ENCODE measurements at regions of chr1 and their contacts with region 1.

Region 1: DNA sequence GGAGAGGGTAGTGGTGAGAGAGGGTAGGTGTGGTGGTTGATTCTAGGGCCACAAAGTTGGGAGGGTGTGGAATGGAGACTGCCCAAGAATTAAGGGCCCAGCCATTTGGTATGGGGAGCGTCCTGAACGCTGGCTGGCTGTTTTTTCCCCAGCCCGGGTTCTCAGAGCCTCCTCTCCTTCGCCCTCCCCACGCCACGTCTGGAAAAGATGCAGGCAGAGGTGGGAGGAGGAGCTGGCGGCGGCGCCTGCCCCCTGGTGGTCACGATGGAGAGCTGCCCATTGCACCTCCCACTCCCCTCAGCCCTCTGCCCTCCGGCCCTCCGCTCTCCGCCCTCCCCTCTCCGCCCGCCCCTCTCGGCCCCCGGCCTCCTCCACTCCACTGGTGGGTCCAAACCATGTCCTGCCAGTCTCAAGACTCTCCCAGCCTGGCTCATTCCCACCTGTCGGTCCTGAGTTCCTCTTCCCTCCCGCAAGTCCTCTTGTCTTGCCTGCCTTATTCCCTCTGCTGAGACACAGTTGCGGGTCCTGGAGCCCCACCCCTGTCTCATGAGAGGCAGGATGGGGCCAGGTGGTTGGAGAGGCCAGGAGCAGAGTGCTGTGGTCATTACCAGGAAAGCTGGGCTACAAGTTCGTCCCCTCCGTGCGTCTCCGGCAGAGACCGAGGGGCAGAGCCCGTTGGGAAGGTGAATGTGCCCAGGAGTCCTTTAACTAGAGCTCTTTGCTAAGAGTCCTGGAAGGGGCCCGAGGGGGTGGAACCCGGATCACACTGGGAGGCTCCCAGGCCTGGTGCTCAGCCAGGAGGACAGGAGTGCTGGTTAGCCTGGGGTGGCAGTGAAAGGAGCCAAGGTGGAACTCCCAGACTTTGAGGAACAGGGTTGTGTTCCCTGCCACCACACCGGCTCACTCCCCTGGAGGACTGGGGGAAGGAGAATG is 22.6 kb downstream of the ETNK2 start:
- DNase-seq: peak; percentile 56 to 75 (median 58)
- H3K4me3 ChIP-seq: no peak overlapping the region
- H3K4me3 Mint-ChIP-seq: peak overlapping the region; percentile 31 to 65
- H3K27ac ChIP-seq: no peak overlapping the region
- H3K27ac Mint-ChIP-seq: peak overlapping the region in 2 of 7 donors; percentile 19 to 33
- H3K4me1 ChIP-seq: peaks cover 7 to 8% of the 10 kb centered on the region in 2 donors
- H3K4me1 Mint-ChIP-seq: peaks cover 8% of the 10 kb centered on the region
- H3K27me3 ChIP-seq: no peaks in the 10 kb centered on the region
- H3K27me3 Mint-ChIP-seq: peaks cover 0 to 5% (median 4%) of the 10 kb centered on the region in 3 donors
- CTCF ChIP-seq: peak; percentile 96

Region 2: DNA sequence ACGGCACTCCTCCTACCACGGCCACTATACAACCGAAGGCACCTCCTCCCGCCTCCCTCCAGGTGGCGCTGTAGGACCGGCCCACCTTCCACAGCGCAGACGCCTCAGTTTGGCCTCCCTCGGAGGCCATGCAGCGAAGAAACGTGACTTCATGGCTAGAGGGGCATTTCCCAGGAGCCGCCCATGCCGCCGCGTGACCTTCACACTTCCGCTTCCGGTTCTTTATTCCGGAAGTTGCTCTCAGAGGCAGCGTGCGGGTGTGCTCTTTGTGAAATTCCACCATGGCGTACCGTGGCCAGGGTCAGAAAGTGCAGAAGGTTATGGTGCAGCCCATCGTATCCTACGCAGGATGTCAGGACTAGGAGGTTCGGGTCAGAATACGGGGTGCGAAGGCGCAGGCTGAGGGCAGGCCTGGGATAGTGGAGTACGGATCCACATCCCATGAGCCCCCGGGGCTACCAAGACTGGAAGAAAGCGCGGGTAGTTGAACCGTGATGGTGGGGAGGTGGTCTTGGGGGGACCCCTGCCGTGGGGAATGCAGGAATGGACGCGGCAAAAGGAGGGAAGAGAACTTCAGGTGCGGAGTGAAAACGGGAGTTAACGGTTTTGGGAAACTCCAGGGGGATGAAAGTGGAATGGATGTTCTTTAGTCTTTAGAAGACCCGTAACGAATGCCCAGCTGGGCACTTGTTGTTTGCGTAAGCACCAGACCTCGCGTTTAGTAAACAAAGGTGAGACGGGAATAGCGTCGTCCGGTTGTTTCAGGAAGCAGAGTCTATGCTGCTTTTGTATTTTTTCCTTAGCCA is 267.6 kb before region 1 on chr1 and contains the start of gene SNRPE:
- intact Hi-C with region 1: loop called (anchors 2 to 5 kb)
- DNase-seq: peak; percentile 97 to 99 (median 98)
- H3K4me3 ChIP-seq: peak within 1 kb of the TSS; percentile 75 to 100 (median 76)
- H3K4me3 Mint-ChIP-seq: peak within 1 kb of the TSS; percentile 95 to 100
- H3K27ac ChIP-seq: peak within 1 kb of the TSS; percentile 45 to 97
- H3K27ac Mint-ChIP-seq: peak within 1 kb of the TSS; percentile 95 to 97 (median 96)
- H3K4me1 ChIP-seq: peaks cover 15 to 19% of the 10 kb centered on the region in 2 donors
- H3K4me1 Mint-ChIP-seq: peaks cover 14% of the 10 kb centered on the region
- H3K27me3 ChIP-seq: no peaks in the 10 kb centered on the region
- H3K27me3 Mint-ChIP-seq: peaks cover 0 to 5% (median 0%) of the 10 kb centered on the region in 3 donors
- CTCF ChIP-seq: peak; percentile 89
- polyA plus RNA-seq, gene SNRPE: 86.4 to 198 (median 162) TPM